ENCODE measurements at regions of chr12 and their contacts with region 1.

Region 1: DNA sequence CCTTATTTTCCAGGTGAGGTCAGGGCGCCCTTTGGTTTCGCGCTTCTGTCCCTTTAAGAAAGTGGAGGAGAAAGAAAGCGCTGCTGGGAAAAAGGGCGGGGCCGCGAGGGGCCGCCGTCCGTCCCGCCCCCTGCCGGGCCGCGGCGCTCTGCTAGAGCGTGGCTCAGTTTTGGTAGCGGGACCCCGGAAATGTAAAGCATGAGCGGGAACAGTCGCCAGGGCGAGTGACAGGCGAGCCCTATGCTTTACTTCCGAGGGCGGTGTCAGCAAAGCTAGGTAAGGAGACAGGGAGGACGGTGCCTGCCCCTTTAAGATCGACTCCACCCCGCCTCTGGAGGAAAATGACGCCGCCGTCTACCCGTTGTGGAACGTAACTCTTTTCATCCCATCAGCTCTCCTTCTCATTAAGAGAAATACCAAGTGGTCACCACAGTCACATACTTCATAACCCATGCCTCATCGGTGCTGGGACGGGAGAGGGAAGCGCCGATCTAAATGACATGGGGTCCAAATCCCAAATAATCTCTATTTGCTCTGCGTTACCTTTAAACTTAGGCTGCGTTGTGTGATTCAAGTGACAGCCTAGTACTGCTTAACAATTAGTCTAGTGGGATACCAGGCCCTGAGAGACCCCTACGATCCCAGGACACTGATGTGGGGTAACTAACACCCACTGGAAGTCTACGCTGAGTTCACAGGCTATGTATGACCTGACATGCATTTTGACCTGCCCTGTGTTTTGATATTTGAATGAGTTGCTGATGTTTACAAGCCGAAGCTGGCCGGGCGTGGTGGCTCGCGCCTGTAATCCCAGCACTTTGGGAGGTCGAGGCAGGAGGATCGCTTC is at the start of gene ETFBKMT:
- DNase-seq: peak; percentile 97
- H3K4me3 ChIP-seq: peak within 1 kb of the TSS; percentile 33 to 83 (median 54)
- H3K27ac ChIP-seq: peak within 1 kb of the TSS; percentile 91 to 99 (median 96)
- H3K4me1 ChIP-seq: peaks cover 0 to 31% (median 12%) of the 10 kb centered on the region in 6 donors
- H3K27me3 ChIP-seq: no peaks in the 10 kb centered on the region
- CTCF ChIP-seq: peak in 9 of 11 experiments; percentile 41 to 78 (median 67)
- POLR2A ChIP-seq: peak in 1 of 3 donors; percentile 77
- total RNA-seq, gene ETFBKMT: 2.9 to 5.6 (median 3.8) TPM

Region 2: DNA sequence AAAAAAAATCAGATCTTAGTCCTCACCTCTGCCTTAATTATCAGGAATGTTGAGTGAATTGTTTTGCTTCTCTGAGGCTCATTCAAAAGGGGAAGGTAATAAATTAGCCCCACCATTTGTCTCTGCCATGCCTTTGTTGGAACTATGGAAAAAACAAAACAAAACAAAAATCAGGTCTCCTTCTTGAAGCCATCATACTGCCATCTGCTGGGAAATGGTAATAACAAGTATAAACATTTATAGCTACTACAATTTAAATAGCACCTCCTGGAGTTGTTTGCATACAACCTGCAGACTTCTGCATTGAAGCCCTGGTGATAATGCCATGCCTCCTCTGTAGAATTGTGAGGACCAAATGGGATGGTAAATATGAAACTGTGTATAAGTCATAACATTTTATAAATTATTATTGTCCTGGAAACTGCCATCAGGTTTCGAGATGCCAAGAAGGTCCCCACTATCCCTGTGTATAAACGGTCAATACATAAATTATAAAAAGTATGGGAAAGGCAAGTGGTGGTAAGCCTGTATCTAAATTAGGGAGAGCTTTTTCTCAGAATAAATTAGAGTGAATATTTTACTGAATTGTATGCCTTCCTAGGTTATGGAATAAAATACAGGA is 652.9 kb after region 1 on chr12:
- intact Hi-C with region 1: loop called (anchors 10 kb)
- DNase-seq: no peak
- H3K4me3 ChIP-seq: no peak overlapping the region
- H3K27ac ChIP-seq: peak overlapping the region in 3 of 8 donors; percentile 23 to 36 (median 31)
- H3K4me1 ChIP-seq: peaks cover 0 to 12% (median 3%) of the 10 kb centered on the region in 6 donors
- H3K27me3 ChIP-seq: no peaks in the 10 kb centered on the region
- CTCF ChIP-seq: peak; percentile 20 to 77 (median 50)
- POLR2A ChIP-seq: no peak

Region 3: GRCh38 chr12:32679091-32679919 is 1020.0 kb after region 1 on chr12 and contains the start of gene DNM1L:
- intact Hi-C with region 1: loop called (anchors 10 kb)
- DNase-seq: peak; percentile 99
- H3K4me3 ChIP-seq: peak within 1 kb of the TSS; percentile 84 to 99 (median 96)
- H3K27ac ChIP-seq: peak within 1 kb of the TSS; percentile 85 to 96 (median 92)
- H3K4me1 ChIP-seq: peaks cover 8 to 52% (median 26%) of the 10 kb centered on the region in 6 donors
- H3K27me3 ChIP-seq: no peaks in the 10 kb centered on the region
- CTCF ChIP-seq: peak in 10 of 11 experiments; percentile 18 to 69 (median 48)
- POLR2A ChIP-seq: peak; percentile 53 to 77 (median 69)
- total RNA-seq, gene DNM1L: 40.5 to 73.7 (median 56.0) TPM